ENCODE measurements at regions of chr3 and their contacts with region 1.

Region 1: DNA sequence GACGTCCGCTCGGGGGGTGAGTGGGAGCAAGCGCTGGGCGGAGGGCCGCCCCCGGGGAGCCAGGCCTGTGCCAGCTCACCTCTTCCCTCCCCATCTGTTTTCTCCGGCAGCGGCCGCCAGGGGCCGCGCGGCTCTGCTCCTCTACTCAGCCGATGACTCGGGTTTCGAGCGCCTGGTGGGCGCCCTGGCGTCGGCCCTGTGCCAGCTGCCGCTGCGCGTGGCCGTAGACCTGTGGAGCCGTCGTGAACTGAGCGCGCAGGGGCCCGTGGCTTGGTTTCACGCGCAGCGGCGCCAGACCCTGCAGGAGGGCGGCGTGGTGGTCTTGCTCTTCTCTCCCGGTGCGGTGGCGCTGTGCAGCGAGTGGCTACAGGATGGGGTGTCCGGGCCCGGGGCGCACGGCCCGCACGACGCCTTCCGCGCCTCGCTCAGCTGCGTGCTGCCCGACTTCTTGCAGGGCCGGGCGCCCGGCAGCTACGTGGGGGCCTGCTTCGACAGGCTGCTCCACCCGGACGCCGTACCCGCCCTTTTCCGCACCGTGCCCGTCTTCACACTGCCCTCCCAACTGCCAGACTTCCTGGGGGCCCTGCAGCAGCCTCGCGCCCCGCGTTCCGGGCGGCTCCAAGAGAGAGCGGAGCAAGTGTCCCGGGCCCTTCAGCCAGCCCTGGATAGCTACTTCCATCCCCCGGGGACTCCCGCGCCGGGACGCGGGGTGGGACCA is 632 bp upstream of the CRELD1 start:
- DNase-seq: peak; percentile 78 to 94 (median 85)
- ATAC-seq: peak; percentile 50
- H3K4me3 ChIP-seq: peak overlapping the region; percentile 65
- H3K4me3 Mint-ChIP-seq: peak overlapping the region; percentile 99
- H3K27ac ChIP-seq: peak overlapping the region; percentile 90 to 91
- H3K27ac Mint-ChIP-seq: peak overlapping the region; percentile 99
- H3K4me1 ChIP-seq: peaks cover 45% of the 10 kb centered on the region
- H3K4me1 Mint-ChIP-seq: peaks cover 65% of the 10 kb centered on the region
- H3K27me3 ChIP-seq: no peaks in the 10 kb centered on the region
- H3K27me3 Mint-ChIP-seq: no peaks in the 10 kb centered on the region
- CTCF ChIP-seq: peak; percentile 87

Region 2: DNA sequence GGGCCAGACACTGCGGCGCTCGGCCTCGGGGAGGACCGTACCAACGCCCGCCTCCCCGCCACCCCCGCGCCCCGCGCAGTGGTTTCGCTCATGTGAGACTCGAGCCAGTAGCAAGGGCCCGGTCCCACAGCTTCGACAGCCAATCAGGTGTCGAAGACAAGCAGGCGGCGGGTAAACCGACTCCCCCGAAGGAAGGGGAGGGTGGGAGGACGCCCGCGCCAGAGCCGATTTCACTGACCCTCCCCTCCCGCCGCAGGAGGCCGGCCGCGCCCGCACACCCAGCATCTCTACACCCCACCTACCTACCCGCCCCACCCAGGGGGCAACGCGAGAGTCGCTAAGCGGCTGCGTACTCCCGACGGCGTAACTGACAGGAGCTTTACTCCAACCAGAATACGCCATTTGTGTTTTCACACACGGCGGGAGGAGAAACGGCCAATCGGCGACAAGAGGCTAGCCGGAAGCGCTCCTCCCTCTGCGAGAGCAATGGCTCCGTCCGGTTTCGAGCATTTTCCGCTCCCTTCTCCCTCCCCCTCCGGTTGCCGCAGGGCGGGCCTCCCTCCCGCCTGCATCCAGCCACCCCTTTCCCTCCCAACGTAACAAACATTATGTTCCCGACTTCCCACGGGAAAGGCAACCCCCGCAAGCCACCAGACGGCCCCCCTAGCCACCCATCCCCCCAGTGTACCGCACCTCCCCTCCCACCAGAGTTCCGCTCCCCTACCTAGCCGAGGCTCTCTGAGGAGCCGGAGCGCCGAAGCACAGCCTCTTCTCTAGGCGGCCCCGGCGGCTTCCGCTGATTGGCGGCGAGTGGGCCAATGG is 536.1 kb before region 1 on chr3:
- CTCF ChIA-PET with region 1: no interaction called
- POLR2A ChIA-PET with region 1: interaction called, 5 read pairs
- intact Hi-C with region 1: loop called in 1 of 2 experiments (anchors 5 kb)
- DNase-seq: peak; percentile 98 to 100 (median 99)
- ATAC-seq: peak; percentile 65
- H3K4me3 ChIP-seq: peak overlapping the region; percentile 74
- H3K4me3 Mint-ChIP-seq: peak overlapping the region; percentile 95
- H3K27ac ChIP-seq: peak overlapping the region; percentile 87 to 95
- H3K27ac Mint-ChIP-seq: peak overlapping the region; percentile 99
- H3K4me1 ChIP-seq: peaks cover 30% of the 10 kb centered on the region
- H3K4me1 Mint-ChIP-seq: peaks cover 78% of the 10 kb centered on the region
- H3K27me3 ChIP-seq: no peaks in the 10 kb centered on the region
- H3K27me3 Mint-ChIP-seq: no peaks in the 10 kb centered on the region
- CTCF ChIP-seq: no peak

Region 3: GRCh38 chr3:9843715-9844438 is 89.1 kb before region 1 on chr3 and contains the start of gene RPUSD3:
- CTCF ChIA-PET with region 1: interaction called, 7 read pairs
- POLR2A ChIA-PET with region 1: interaction called, 17 read pairs
- intact Hi-C with region 1: loop called (anchors 5 kb)
- DNase-seq: peak; percentile 93 to 98 (median 96)
- ATAC-seq: peak; percentile 98
- H3K4me3 ChIP-seq: peak within 1 kb of the TSS; percentile 73
- H3K4me3 Mint-ChIP-seq: peak within 1 kb of the TSS; percentile 98
- H3K27ac ChIP-seq: peak within 1 kb of the TSS; percentile 21 to 38
- H3K27ac Mint-ChIP-seq: peak within 1 kb of the TSS; percentile 80
- H3K4me1 ChIP-seq: peaks cover 28% of the 10 kb centered on the region
- H3K4me1 Mint-ChIP-seq: peaks cover 28% of the 10 kb centered on the region
- H3K27me3 ChIP-seq: no peaks in the 10 kb centered on the region
- H3K27me3 Mint-ChIP-seq: no peaks in the 10 kb centered on the region
- CTCF ChIP-seq: no peak
- total RNA-seq, gene RPUSD3: 7.9 to 8.1 TPM

Region 4: DNA sequence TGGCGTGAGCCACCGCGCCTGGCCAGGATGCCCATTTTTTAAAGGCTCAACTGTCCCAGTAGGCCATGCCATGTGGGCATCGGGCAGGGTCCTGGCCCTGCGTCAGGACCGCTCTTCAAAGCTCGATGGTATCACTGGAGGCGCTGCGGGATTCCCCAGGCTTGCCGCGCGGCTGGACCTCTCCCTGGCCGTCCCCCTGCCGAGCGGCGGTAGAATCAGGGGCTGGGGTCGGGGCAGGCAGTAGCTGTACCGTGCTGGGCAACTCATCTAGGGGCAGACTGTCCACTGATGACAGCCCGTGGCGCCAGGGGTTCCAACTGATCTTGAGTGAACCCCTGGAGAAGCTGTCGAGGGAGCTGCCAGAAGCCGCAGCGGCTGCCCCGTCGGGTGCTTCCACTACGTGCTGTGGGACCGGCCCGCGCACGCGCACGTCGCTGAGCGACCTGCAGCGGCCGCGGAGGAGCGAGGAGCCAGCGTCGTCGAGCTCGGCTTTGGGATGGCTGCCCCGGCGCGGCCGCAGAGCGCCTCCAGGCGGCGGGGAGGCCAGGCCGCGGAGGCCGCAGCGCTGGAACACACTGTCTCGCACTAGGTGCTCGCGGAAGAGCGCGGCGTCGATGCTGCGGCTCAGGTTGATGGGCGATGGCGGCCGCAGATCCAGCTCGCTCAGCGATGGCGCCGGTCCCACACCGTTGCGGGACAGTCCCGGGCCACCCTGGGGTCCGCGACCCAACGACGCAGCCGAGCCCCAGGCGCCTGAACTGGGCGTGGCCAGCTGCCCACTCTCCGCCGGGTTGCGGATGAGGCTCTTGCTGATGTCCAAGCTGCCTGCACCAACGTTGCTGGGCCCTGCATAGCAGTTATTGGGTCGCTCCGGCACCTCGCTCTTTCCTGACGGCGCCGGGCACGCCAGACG is 13.4 kb after region 1 on chr3:
- CTCF ChIA-PET with region 1: interaction called, 20 read pairs
- POLR2A ChIA-PET with region 1: interaction called, 86 read pairs
- intact Hi-C with region 1: loop called in 1 of 2 experiments (anchors 1 kb)
- DNase-seq: peak; percentile 65 to 91 (median 78)
- ATAC-seq: peak; percentile 93
- H3K4me3 ChIP-seq: peak overlapping the region; percentile 59
- H3K4me3 Mint-ChIP-seq: peak overlapping the region; percentile 62
- H3K27ac ChIP-seq: peak overlapping the region; percentile 47 to 55
- H3K27ac Mint-ChIP-seq: peak overlapping the region; percentile 70
- H3K4me1 ChIP-seq: peaks cover 16% of the 10 kb centered on the region
- H3K4me1 Mint-ChIP-seq: peaks cover 7% of the 10 kb centered on the region
- H3K27me3 ChIP-seq: no peaks in the 10 kb centered on the region
- H3K27me3 Mint-ChIP-seq: no peaks in the 10 kb centered on the region
- CTCF ChIP-seq: peak; percentile 34

Region 5: GRCh38 chr3:10115326-10116137 is 182.5 kb after region 1 on chr3 and contains the start of gene BRK1:
- CTCF ChIA-PET with region 1: interaction called, 5 read pairs
- POLR2A ChIA-PET with region 1: interaction called, 6 read pairs
- intact Hi-C with region 1: loop called in 1 of 2 experiments (anchors 2 kb)
- DNase-seq: peak; percentile 83 to 98 (median 92)
- ATAC-seq: peak; percentile 97
- H3K4me3 ChIP-seq: peak within 1 kb of the TSS; percentile 98
- H3K4me3 Mint-ChIP-seq: peak within 1 kb of the TSS; percentile 95
- H3K27ac ChIP-seq: peak within 1 kb of the TSS; percentile 64 to 74
- H3K27ac Mint-ChIP-seq: peak within 1 kb of the TSS; percentile 88
- H3K4me1 ChIP-seq: peaks cover 41% of the 10 kb centered on the region
- H3K4me1 Mint-ChIP-seq: peaks cover 36% of the 10 kb centered on the region
- H3K27me3 ChIP-seq: no peaks in the 10 kb centered on the region
- H3K27me3 Mint-ChIP-seq: no peaks in the 10 kb centered on the region
- CTCF ChIP-seq: no peak
- total RNA-seq, gene BRK1: 33.1 to 33.8 TPM

Region 6: GRCh38 chr3:10248184-10249080 is 315.4 kb after region 1 on chr3 and contains the start of gene TATDN2:
- CTCF ChIA-PET with region 1: interaction called, 4 read pairs
- POLR2A ChIA-PET with region 1: interaction called, 14 read pairs
- intact Hi-C with region 1: loop called in 1 of 2 experiments (anchors 2 kb)
- DNase-seq: peak; percentile 81 to 98 (median 90)
- ATAC-seq: peak; percentile 93
- H3K4me3 ChIP-seq: peak within 1 kb of the TSS; percentile 83
- H3K4me3 Mint-ChIP-seq: peak within 1 kb of the TSS; percentile 97
- H3K27ac ChIP-seq: peak within 1 kb of the TSS; percentile 63 to 83
- H3K27ac Mint-ChIP-seq: peak within 1 kb of the TSS; percentile 90
- H3K4me1 ChIP-seq: peaks cover 56% of the 10 kb centered on the region
- H3K4me1 Mint-ChIP-seq: peaks cover 60% of the 10 kb centered on the region
- H3K27me3 ChIP-seq: no peaks in the 10 kb centered on the region
- H3K27me3 Mint-ChIP-seq: no peaks in the 10 kb centered on the region
- CTCF ChIP-seq: no peak
- total RNA-seq, gene TATDN2: 48.7 to 50.2 TPM